IMR-90 (cell line): ENCODE measurements at regions of chr16 and their contacts with region 1.

Region 1: DNA sequence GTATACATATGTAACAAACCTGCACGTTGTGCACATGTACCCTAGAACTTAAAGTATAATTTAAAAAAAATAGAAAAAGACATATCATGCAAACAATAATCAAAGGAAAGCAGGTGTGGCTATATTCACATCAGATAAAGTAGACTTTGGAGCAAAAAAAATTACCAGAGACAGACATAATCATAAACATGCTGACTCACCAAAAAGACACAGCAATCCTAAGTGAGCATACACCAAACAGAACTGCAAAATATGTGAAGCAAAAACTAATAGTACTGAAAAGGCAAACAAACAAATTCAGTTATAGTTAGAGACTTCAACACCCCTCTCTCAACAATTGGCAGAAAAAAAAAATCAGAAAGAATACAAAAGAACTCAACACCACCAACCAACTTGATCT is 29.9 kb downstream of the SHCBP1 start:
- DNase-seq: no peak
- ATAC-seq: no peak
- H3K4me3 ChIP-seq: no peak overlapping the region
- H3K27ac ChIP-seq: no peak overlapping the region
- H3K4me1 ChIP-seq: no peaks in the 10 kb centered on the region
- H3K27me3 ChIP-seq: no peaks in the 10 kb centered on the region
- CTCF ChIP-seq: no peak
- POLR2A ChIP-seq: no peak
- RAD21 ChIP-seq: no peak

Region 2: DNA sequence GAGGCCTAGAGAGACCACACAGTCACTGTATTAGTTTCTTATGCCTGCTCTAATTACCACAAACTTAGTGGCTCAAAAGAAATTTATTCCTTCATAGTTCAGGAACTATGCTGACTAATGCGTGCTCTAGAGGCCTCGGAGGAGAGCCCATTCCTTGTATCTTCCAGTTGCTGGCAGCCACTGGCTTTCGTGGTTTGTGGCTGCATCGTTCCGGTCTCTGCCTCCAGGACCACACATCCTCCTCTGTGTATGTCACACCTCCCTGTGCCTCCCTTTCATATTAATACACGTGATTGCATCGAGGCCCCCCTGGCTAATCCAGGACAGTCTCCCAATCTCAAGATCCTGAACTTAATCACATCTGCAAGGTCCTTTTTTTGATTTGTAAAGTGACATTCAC is 173.8 kb after region 1 on chr16:
- CTCF ChIA-PET with region 1: interaction called, 10 read pairs
- POLR2A ChIA-PET with region 1: no interaction called
- dilution Hi-C with region 1: no loop called
- in situ Hi-C with region 1: no loop called
- intact Hi-C with region 1: no loop called
- DNase-seq: peak; percentile 76
- ATAC-seq: peak; percentile 93
- H3K4me3 ChIP-seq: no peak overlapping the region
- H3K27ac ChIP-seq: no peak overlapping the region
- H3K4me1 ChIP-seq: no peaks in the 10 kb centered on the region
- H3K27me3 ChIP-seq: no peaks in the 10 kb centered on the region; the same call in 1 of the 2 replicates
- CTCF ChIP-seq: no peak
- POLR2A ChIP-seq: no peak
- RAD21 ChIP-seq: no peak